PC-9 (cell line): ENCODE measurements at regions of chr13 and their contacts with region 1.

Region 1: GRCh38 chr13:104436555-104436954 is 1370.3 kb upstream of the SLC10A2 start:
- DNase-seq: no peak
- H3K4me3 ChIP-seq: no peak overlapping the region
- H3K27ac ChIP-seq: no peak overlapping the region
- H3K4me1 ChIP-seq: no peaks in the 10 kb centered on the region
- H3K27me3 ChIP-seq: no peaks in the 10 kb centered on the region
- CTCF ChIP-seq: no peak

Region 2: GRCh38 chr13:102881819-102882686 is 1554.5 kb before region 1 on chr13:
- CTCF ChIA-PET with region 1: no interaction called
- POLR2A ChIA-PET with region 1: interaction called, 10 read pairs
- intact Hi-C with region 1: no loop called
- DNase-seq: no peak
- H3K4me3 ChIP-seq: no peak overlapping the region
- H3K27ac ChIP-seq: no peak overlapping the region
- H3K4me1 ChIP-seq: no peaks in the 10 kb centered on the region
- H3K27me3 ChIP-seq: no peaks in the 10 kb centered on the region
- CTCF ChIP-seq: no peak

Region 3: GRCh38 chr13:104460554-104460953 is 24.0 kb after region 1 on chr13:
- CTCF ChIA-PET with region 1: no interaction called
- POLR2A ChIA-PET with region 1: no interaction called
- intact Hi-C with region 1: no loop called
- DNase-seq: no peak
- H3K4me3 ChIP-seq: no peak overlapping the region
- H3K27ac ChIP-seq: no peak overlapping the region
- H3K4me1 ChIP-seq: peaks cover 7% of the 10 kb centered on the region
- H3K27me3 ChIP-seq: no peaks in the 10 kb centered on the region
- CTCF ChIP-seq: no peak